ENCODE measurements at regions of chr7 and their contacts with region 1.

Region 1: DNA sequence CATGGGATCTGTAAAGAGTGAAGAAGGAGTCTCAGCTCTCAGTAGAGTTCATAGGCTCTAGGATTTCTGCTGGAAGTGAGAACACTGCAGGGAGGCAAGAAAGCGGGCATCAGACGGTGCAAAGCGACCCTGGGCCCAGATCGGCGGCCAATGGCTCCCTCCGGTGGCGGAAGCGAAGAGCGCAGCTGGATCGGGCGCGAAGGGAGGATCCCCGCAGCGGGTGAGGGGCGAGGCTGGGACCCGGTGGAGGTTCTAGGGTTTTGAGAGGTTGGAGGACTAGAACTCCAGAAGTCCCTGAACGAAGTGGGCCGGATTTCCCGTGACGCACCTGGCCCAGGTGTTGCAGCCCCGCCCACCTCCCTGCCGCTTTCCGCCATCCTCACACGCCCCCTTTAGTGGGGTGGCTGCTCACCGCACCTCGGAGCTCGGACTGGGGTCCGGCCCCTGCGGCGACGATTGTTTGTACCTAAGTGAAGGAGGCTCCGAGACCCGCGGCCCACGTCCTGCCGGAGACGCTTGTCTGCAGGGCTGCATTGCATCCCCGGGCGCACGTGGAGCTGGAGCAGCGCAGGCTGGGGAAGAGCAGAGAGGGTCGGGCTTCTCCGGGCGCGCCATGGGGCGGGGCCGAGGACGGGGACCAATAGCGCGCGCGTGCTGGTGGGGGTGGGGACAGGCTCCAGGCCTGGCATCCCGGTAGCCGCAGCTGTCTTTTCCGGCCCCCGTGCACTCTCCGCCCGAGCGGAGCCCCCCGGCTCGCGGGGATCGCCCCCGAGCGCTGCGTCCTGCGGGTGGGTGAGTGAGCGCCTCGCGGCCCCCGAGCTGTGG is at the start of gene SLC12A9:
- DNase-seq: peak; percentile 90 to 92
- H3K4me3 ChIP-seq: peak within 1 kb of the TSS; percentile 47 to 94 (median 71)
- H3K27ac ChIP-seq: peak within 1 kb of the TSS in 1 of 3 donors; percentile 50
- H3K4me1 ChIP-seq: peaks cover 7 to 16% of the 10 kb centered on the region in 2 donors
- H3K27me3 ChIP-seq: no peaks in the 10 kb centered on the region
- CTCF ChIP-seq: peak; percentile 81 to 94 (median 90)
- POLR2A ChIP-seq: peak in 1 of 2 donors; percentile 62
- total RNA-seq, gene SLC12A9: 15.2 to 27.9 (median 17.2) TPM

Region 2: GRCh38 chr7:100538654-100539435 is 313.4 kb before region 1 on chr7 and contains the start of gene AGFG2:
- intact Hi-C with region 1: no loop called
- DNase-seq: peak; percentile 100
- H3K4me3 ChIP-seq: peak within 1 kb of the TSS in 2 of 3 donors; percentile 40 to 83
- H3K27ac ChIP-seq: peak within 1 kb of the TSS in 2 of 3 donors; percentile 50 to 57
- H3K4me1 ChIP-seq: peaks cover 11 to 18% of the 10 kb centered on the region in 2 donors
- H3K27me3 ChIP-seq: no peaks in the 10 kb centered on the region
- CTCF ChIP-seq: no peak
- POLR2A ChIP-seq: peak in 1 of 2 donors; percentile 93
- total RNA-seq, gene AGFG2: 26.1 to 34.6 (median 28.0) TPM

Region 3: GRCh38 chr7:100705753-100706671 is 146.2 kb before region 1 on chr7 and contains the start of gene POP7:
- intact Hi-C with region 1: loop called (anchors 10 kb)
- DNase-seq: peak; percentile 99 to 100
- H3K4me3 ChIP-seq: peak within 1 kb of the TSS; percentile 86 to 92 (median 91)
- H3K27ac ChIP-seq: peak within 1 kb of the TSS; percentile 79 to 93 (median 82)
- H3K4me1 ChIP-seq: peaks cover 14 to 16% of the 10 kb centered on the region in 2 donors
- H3K27me3 ChIP-seq: no peaks in the 10 kb centered on the region
- CTCF ChIP-seq: no peak
- POLR2A ChIP-seq: peak in 1 of 2 donors; percentile 78
- total RNA-seq, gene POP7: 15.8 to 44.8 (median 21.0) TPM

Region 4: DNA sequence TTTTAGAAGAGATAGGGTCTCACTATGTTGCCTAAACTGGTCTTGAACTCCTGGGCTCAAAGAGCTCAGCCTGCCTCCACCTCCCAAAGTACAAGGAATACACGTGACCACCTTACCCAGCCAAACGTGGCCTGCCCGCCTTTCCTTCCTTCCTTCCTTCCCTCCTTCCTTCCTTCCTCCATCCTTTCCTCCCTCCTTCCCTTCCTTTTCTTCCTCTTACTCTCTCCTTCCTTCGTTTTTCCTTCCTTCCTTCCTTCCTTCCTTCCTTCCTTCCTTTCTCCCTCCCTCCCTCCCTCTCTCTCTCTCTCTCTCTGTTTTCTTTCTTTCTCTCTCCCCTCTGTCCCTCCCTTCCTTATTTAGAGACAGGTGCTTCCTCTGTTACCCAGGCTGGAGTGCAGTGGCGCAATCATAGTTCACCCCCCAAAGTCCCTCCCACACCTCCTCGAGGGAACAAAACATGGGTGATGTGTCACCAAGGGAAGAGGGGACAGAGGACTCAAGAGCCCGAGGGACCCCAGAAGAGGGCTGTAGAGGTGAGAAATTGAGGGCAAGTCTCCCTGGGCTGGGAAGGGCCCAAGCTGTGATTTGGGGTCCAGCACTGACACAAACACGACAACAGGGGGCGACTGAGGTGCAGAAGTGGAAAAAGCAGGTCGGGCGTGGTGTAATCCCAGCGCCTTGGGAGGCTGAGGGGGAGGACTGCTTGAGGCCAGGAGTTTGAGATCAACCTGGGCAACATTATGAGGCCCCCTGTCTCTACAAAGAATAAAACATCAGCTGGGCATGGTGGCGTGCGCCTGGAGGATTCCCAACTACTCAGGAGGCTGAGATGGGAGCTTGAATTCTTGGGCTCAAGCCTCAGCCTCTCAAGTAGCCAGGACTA is 53.0 kb before region 1 on chr7:
- intact Hi-C with region 1: loop called (anchors 2 kb)
- DNase-seq: peak; percentile 56 to 59
- H3K4me3 ChIP-seq: no peak overlapping the region
- H3K27ac ChIP-seq: no peak overlapping the region
- H3K4me1 ChIP-seq: peaks cover 7 to 12% of the 10 kb centered on the region in 2 donors
- H3K27me3 ChIP-seq: no peaks in the 10 kb centered on the region
- CTCF ChIP-seq: peak; percentile 24 to 63 (median 54)
- POLR2A ChIP-seq: no peak

Measured in thyroid gland (tissue), 4 donors.